Testis (tissue), 5 donors: ENCODE measurements at regions of chr1 and their contacts with region 1.

Region 1: DNA sequence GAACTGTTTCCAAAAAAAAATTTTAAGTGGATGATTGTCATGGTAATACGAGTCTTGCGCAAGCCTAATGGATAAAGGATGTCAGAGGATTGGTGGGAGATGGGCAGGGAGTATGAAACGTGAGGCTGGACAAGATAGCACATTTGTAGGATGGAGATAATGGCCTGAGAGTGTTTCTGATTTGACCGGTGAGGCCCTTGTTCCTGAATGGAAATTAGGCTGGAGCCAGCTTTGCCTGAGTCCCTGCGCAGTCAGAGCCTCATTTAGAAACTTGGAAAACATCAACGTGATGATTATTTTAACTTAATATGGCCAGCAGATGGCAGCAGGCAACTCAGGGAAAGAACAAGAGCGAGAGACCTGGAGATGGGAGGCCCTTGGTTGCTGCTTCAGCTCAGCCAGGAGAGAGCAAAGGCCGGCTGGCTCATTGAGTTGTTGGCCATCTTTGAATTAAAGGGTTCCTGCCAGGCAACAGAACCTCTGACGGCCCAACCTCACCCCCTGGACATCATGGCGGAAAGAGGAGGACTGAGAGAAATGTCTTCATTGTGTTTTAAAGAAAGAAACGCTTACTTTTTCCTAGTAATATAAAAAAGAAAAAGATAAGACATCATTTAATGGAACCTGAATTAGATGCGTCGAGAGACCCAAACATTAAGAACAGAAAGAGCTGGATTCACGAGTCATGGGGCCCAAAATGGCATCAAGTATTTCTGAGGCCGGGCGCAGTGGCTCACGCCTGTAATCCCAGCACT is 80.3 kb downstream of the SELENOF start:
- DNase-seq: peak; percentile 89
- H3K4me3 ChIP-seq: peak overlapping the region; percentile 2 to 36
- H3K27ac ChIP-seq: no peak overlapping the region
- H3K4me1 ChIP-seq: peaks cover 11% of the 10 kb centered on the region
- H3K27me3 ChIP-seq: no peaks in the 10 kb centered on the region
- CTCF ChIP-seq: peak; percentile 44 to 75 (median 54)
- POLR2A ChIP-seq: no peak

Region 2: GRCh38 chr1:86965012-86965826 is 131.6 kb after region 1 on chr1:
- intact Hi-C with region 1: loop called (anchors 10 kb)
- DNase-seq: no peak
- H3K4me3 ChIP-seq: no peak overlapping the region
- H3K27ac ChIP-seq: no peak overlapping the region
- H3K4me1 ChIP-seq: no peaks in the 10 kb centered on the region
- H3K27me3 ChIP-seq: no peaks in the 10 kb centered on the region
- CTCF ChIP-seq: peak; percentile 10 to 42 (median 35)
- POLR2A ChIP-seq: no peak

Region 3: GRCh38 chr1:87084244-87084836 is 250.7 kb after region 1 on chr1:
- intact Hi-C with region 1: loop called (anchors 10 kb)
- DNase-seq: no peak
- H3K4me3 ChIP-seq: no peak overlapping the region
- H3K27ac ChIP-seq: no peak overlapping the region
- H3K4me1 ChIP-seq: no peaks in the 10 kb centered on the region
- H3K27me3 ChIP-seq: no peaks in the 10 kb centered on the region
- CTCF ChIP-seq: peak in 1 of 3 experiments; percentile 78
- POLR2A ChIP-seq: no peak